ENCODE measurements at regions of chr4 and their contacts with region 1.

Region 1: DNA sequence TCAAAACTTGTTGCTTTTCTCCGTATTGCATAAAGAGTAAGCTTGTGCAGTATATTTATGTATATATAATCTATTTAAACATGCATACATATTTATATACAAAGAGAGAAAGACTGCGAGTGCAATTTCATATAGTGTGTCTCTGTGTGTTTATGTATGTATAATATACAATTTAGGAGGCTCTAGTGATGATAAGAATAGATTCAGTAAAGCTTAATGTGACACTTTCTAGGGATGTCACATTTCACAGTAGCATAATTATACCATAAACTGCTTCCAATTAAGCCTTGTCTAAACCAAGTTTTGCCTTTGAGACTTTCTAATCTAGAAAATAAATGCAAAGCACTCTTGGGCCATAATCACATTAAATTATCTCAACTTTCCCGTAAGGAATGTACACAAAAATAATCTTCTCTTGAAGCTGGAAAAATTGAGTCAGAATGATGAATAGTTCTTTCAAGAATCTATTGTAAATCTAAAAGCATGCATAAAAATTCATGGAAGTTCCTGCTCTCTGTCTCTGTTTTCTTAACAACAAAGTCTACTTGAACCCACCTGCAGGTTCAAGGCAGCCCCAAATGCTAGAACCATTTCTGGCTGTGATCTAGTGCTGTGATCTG is 114.1 kb upstream of the NPY2R start:
- DNase-seq: no peak
- H3K4me3 ChIP-seq: no peak overlapping the region
- H3K27ac ChIP-seq: no peak overlapping the region
- H3K4me1 ChIP-seq: no peaks in the 10 kb centered on the region
- H3K27me3 ChIP-seq: no peaks in the 10 kb centered on the region
- CTCF ChIP-seq: no peak
- POLR2A ChIP-seq: no peak

Region 2: GRCh38 chr4:155161357-155161756 is 67.0 kb after region 1 on chr4:
- intact Hi-C with region 1: loop called (anchors 2 kb)
- DNase-seq: no peak
- H3K4me3 ChIP-seq: no peak overlapping the region
- H3K27ac ChIP-seq: no peak overlapping the region
- H3K4me1 ChIP-seq: no peaks in the 10 kb centered on the region
- H3K27me3 ChIP-seq: no peaks in the 10 kb centered on the region
- CTCF ChIP-seq: no peak
- POLR2A ChIP-seq: no peak

Region 3: DNA sequence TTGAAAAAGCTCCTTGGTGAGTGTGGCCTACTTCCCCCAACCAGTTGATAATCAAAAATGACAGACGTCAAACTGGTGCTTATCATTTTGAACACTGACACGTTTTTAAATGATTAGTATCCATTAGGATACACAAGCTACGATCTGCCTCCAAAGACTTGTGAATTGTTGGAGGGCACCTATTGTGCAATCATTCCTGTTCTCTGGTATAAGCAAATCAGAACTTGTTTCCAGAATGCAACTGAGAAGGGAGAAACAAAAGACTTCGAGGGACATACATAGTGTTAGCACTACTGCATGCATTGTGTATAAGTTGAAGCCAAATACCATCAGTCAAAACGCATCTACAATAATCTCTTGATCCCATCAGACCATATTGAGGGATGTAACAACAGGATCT is 125.7 kb after region 1 on chr4:
- intact Hi-C with region 1: no loop called
- DNase-seq: no peak
- H3K4me3 ChIP-seq: no peak overlapping the region
- H3K27ac ChIP-seq: no peak overlapping the region
- H3K4me1 ChIP-seq: no peaks in the 10 kb centered on the region
- H3K27me3 ChIP-seq: no peaks in the 10 kb centered on the region
- CTCF ChIP-seq: no peak
- POLR2A ChIP-seq: no peak

Measured in breast epithelium (tissue), 4 donors.